Activated CD4-positive, alpha-beta T cell treated with anti-CD3 and anti-CD28 coated beads for 36 hours (primary cell): ENCODE measurements at regions of chr12 and their contacts with region 1.

Region 1: GRCh38 chr12:68290126-68290525 is 36.7 kb upstream of the IL22 start:
- DNase-seq: peak; percentile 49
- ATAC-seq: peak; percentile 91
- H3K4me3 Mint-ChIP-seq: no peak overlapping the region
- H3K27ac Mint-ChIP-seq: no peak overlapping the region
- H3K4me1 Mint-ChIP-seq: peaks cover 39% of the 10 kb centered on the region
- H3K27me3 Mint-ChIP-seq: peaks cover 13% of the 10 kb centered on the region

Region 2: DNA sequence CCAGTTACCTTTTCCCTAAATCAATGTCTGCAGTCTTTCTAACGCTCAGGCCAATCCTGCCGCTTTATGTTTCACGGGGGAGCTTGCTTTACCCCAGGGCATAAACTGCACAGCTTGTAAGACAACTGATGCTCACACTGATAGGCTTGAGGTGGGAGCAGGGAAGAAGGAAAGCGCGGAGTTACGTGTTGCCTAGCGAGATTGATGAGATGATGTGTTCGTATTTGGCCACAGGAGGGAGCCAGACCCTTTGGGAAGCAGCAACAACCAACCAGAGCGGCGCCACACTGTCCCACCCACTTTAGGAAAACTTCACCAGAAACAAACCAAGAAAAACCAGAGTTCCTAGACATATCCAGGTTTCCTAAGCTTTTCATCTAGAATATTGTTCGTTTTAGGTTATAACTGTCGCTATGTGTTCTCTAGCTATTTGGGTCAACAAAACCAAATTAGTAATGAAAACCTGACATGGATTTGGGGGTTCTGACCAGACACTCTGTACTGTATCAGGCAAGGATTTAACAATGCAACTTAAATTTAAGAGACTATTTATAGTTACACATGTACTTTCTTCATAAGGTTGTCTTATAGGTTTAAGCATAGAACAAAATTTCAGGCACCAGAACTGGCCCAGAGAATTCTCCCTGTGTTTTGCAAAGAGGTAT is 66.9 kb before region 1 on chr12:
- CTCF ChIA-PET with region 1: interaction called, 17 read pairs
- POLR2A ChIA-PET with region 1: interaction called, 6 read pairs
- intact Hi-C with region 1: no loop called
- DNase-seq: peak; percentile 85
- ATAC-seq: peak; percentile 95
- H3K4me3 Mint-ChIP-seq: no peak overlapping the region
- H3K27ac Mint-ChIP-seq: no peak overlapping the region
- H3K4me1 Mint-ChIP-seq: peaks cover 10% of the 10 kb centered on the region
- H3K27me3 Mint-ChIP-seq: peaks cover 13% of the 10 kb centered on the region

Region 3: DNA sequence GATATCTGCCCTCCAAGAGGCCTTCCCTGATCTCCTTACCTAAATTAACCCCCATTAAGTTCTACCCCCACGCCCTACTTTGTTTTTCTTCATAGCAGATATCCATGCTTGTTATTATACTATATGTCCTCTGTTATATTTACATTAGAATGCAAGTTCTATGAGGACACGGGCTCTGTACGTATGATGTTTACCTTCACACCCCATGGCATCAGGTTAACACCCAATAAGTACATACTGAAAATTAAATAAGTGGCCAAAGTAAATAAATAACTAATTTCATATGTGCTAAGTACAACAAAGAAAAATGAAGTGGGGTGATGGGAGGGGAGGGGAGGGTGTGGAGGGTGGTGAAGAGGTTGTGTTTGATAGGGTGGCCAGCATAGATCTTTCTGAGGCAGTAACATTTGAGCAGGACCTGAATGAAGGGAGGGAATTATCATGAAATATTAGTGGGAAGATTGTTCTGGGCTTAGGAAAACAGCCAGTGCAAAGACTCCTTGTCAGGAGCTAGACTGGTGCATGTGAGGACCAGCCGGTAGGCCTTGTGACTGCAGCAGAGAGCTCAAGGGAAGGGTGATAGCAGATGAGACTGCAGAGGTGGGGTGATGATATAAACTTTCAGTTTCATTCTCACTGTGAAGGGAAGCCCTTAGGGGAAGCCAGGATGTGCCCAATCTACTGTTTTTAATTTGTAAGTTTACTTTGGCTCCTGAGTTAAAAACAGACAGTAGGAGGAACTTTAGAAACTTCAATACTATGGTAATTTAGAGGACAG is 49.3 kb before region 1 on chr12:
- CTCF ChIA-PET with region 1: interaction called, 4 read pairs
- POLR2A ChIA-PET with region 1: interaction called, 6 read pairs
- intact Hi-C with region 1: loop called (anchors 1 to 2 kb)
- DNase-seq: peak; percentile 73
- ATAC-seq: peak; percentile 97
- H3K4me3 Mint-ChIP-seq: peak overlapping the region; percentile 4
- H3K27ac Mint-ChIP-seq: peak overlapping the region; percentile 27
- H3K4me1 Mint-ChIP-seq: peaks cover 48% of the 10 kb centered on the region
- H3K27me3 Mint-ChIP-seq: peaks cover 2% of the 10 kb centered on the region

Region 4: DNA sequence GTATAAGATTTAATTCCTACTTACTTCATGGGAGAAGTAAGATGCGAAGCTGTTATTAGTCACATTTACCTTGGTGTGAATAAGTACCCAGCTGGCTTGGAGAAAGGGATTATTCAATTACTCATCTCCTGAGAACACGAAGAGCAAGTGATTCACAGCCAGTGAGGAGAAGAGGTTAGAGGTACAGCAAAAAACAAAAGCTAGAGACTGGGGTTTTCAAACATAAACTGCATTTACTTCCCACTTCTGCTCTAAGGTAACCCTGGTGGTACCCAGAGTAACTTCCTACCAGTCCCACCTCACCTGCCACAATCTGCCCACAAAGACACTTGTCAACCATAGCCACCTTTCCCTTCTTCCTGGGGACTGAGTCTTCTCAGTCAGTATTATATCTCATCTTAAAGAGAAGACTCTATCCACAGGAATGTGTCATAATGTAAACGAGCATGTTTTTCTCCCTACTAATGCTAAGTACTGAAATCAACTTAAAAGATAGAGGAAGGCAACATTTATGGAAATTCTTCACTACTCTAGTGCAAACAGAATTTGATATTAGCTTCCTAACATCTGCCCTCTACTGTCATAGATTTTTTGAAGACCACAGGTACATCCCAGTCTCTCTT is 30.7 kb before region 1 on chr12:
- CTCF ChIA-PET with region 1: interaction called, 4 read pairs
- POLR2A ChIA-PET with region 1: no interaction called
- intact Hi-C with region 1: loop called (anchors 1 kb)
- DNase-seq: peak; percentile 62
- ATAC-seq: peak; percentile 95
- H3K4me3 Mint-ChIP-seq: no peak overlapping the region
- H3K27ac Mint-ChIP-seq: peak overlapping the region; percentile 30
- H3K4me1 Mint-ChIP-seq: peaks cover 31% of the 10 kb centered on the region
- H3K27me3 Mint-ChIP-seq: peaks cover 35% of the 10 kb centered on the region

Region 5: GRCh38 chr12:68279227-68280054 is 10.7 kb before region 1 on chr12:
- CTCF ChIA-PET with region 1: interaction called, 7 read pairs
- POLR2A ChIA-PET with region 1: interaction called, 7 read pairs
- intact Hi-C with region 1: loop called (anchors 1 kb)
- DNase-seq: no peak
- ATAC-seq: no peak
- H3K4me3 Mint-ChIP-seq: no peak overlapping the region
- H3K27ac Mint-ChIP-seq: no peak overlapping the region
- H3K4me1 Mint-ChIP-seq: peaks cover 33% of the 10 kb centered on the region
- H3K27me3 Mint-ChIP-seq: peaks cover 22% of the 10 kb centered on the region

Region 6: DNA sequence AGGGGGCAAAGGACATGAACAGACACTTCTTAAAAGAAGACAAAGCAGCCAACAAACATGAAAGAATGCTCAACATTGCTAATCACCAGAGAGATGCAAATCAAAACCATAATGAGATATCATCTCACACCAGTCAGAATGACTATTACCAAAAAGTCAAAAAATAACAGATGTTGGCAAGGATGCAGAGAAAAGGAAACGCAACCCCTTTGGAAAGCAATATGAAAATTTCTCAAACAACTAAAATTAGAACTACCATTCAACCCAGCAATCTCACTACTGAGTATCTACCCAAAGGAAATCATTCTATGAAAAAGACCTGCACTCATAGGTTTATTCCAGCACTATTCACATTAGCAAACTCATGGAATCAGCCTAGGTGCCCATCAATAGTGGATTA is 16.4 kb after region 1 on chr12:
- CTCF ChIA-PET with region 1: no interaction called
- POLR2A ChIA-PET with region 1: interaction called, 3 read pairs
- intact Hi-C with region 1: loop called in 1 of 2 experiments (anchors 2 kb)
- DNase-seq: no peak
- ATAC-seq: peak; percentile 53
- H3K4me3 Mint-ChIP-seq: no peak overlapping the region
- H3K27ac Mint-ChIP-seq: no peak overlapping the region
- H3K4me1 Mint-ChIP-seq: peaks cover 10% of the 10 kb centered on the region
- H3K27me3 Mint-ChIP-seq: no peaks in the 10 kb centered on the region

Region 7: DNA sequence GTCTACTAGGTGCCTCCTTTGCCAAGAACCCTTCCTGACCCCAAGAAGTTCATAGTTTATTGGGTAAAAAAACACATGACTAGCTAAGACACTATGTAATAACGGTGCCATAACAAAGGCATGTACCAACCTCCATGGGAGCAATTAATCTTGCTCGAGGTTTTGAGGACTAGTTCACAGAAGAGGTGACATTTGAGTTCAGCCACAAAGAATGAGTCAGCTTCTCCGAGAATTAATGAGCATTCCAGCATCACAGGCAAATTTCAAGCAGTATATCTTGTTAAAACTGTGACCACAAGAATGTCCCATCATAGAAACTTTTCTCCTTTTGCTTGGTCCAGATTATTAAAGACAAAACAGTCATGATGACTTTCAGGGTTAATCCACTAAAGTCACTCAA is 207.6 kb after region 1 on chr12:
- CTCF ChIA-PET with region 1: no interaction called
- POLR2A ChIA-PET with region 1: no interaction called
- intact Hi-C with region 1: loop called in 1 of 2 experiments (anchors 1 kb)
- DNase-seq: peak; percentile 27
- ATAC-seq: peak; percentile 78
- H3K4me3 Mint-ChIP-seq: peak overlapping the region; percentile 53
- H3K27ac Mint-ChIP-seq: peak overlapping the region; percentile 86
- H3K4me1 Mint-ChIP-seq: peaks cover 37% of the 10 kb centered on the region
- H3K27me3 Mint-ChIP-seq: peaks cover 2% of the 10 kb centered on the region